Activated CD4-positive, alpha-beta memory T cell treated with anti-CD3 and anti-CD28 coated beads, Interleukin-2, amount 10 ng/mL, durations not matched to agents 7 days and 5 days (primary cell): ENCODE measurements at regions of chr15 and their contacts with region 1.

Region 1: DNA sequence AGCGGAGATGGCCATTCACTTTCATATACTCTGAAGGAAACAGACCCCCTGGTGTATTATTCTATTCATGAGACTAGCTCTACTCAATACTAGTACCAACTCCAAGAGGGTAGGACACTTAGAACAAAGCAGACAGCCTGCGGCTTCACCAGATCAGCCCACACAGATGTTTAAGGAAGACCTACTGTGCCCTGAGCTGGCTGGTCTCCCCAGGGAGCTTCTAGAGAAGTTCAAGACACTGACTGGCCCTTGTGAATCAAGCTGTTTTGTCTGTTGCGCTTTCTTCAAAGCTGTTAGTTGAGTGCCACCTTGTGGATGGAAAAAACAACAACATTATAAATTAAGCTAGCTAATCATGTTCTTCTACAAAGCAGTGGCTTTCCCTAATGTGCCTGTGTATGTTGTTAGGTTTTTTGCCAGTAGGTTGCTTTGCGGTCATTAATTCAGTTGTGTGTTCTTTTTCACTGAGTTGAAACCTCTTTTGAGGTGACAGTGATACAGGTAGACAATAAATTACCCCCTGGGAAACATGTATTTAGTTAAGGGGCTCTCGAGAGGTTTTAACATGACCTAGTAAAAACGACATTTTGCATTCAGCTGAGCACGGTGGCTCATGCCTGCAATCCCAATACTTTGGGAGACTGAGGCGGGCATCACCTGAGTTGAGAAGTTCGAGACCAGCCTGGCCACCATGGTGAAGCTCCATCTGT is 64.2 kb upstream of the MYZAP start:
- DNase-seq: no peak
- H3K4me3 Mint-ChIP-seq: no peak overlapping the region
- H3K27ac Mint-ChIP-seq: no peak overlapping the region
- H3K4me1 Mint-ChIP-seq: no peaks in the 10 kb centered on the region
- H3K27me3 Mint-ChIP-seq: peaks cover 23% of the 10 kb centered on the region

Region 2: GRCh38 chr15:57146506-57147201 is 380.9 kb before region 1 on chr15:
- CTCF ChIA-PET with region 1: interaction called, 14 read pairs
- POLR2A ChIA-PET with region 1: no interaction called
- DNase-seq: no peak
- H3K4me3 Mint-ChIP-seq: no peak overlapping the region
- H3K27ac Mint-ChIP-seq: no peak overlapping the region
- H3K4me1 Mint-ChIP-seq: peaks cover 4% of the 10 kb centered on the region
- H3K27me3 Mint-ChIP-seq: no peaks in the 10 kb centered on the region

Region 3: GRCh38 chr15:57340682-57341259 is 186.8 kb before region 1 on chr15:
- CTCF ChIA-PET with region 1: interaction called, 93 read pairs
- POLR2A ChIA-PET with region 1: no interaction called
- DNase-seq: peak; percentile 36
- H3K4me3 Mint-ChIP-seq: no peak overlapping the region
- H3K27ac Mint-ChIP-seq: no peak overlapping the region
- H3K4me1 Mint-ChIP-seq: no peaks in the 10 kb centered on the region
- H3K27me3 Mint-ChIP-seq: peaks cover 8% of the 10 kb centered on the region

Region 4: GRCh38 chr15:57516327-57517031 is 11.1 kb before region 1 on chr15:
- CTCF ChIA-PET with region 1: interaction called, 10 read pairs
- POLR2A ChIA-PET with region 1: interaction called, 4 read pairs
- DNase-seq: no peak
- H3K4me3 Mint-ChIP-seq: no peak overlapping the region
- H3K27ac Mint-ChIP-seq: no peak overlapping the region
- H3K4me1 Mint-ChIP-seq: no peaks in the 10 kb centered on the region
- H3K27me3 Mint-ChIP-seq: no peaks in the 10 kb centered on the region

Region 5: GRCh38 chr15:57541805-57542504 is 14.4 kb after region 1 on chr15:
- CTCF ChIA-PET with region 1: interaction called, 14 read pairs
- POLR2A ChIA-PET with region 1: no interaction called
- DNase-seq: peak; percentile 35
- H3K4me3 Mint-ChIP-seq: no peak overlapping the region
- H3K27ac Mint-ChIP-seq: no peak overlapping the region
- H3K4me1 Mint-ChIP-seq: peaks cover 2% of the 10 kb centered on the region
- H3K27me3 Mint-ChIP-seq: peaks cover 9% of the 10 kb centered on the region

Region 6: DNA sequence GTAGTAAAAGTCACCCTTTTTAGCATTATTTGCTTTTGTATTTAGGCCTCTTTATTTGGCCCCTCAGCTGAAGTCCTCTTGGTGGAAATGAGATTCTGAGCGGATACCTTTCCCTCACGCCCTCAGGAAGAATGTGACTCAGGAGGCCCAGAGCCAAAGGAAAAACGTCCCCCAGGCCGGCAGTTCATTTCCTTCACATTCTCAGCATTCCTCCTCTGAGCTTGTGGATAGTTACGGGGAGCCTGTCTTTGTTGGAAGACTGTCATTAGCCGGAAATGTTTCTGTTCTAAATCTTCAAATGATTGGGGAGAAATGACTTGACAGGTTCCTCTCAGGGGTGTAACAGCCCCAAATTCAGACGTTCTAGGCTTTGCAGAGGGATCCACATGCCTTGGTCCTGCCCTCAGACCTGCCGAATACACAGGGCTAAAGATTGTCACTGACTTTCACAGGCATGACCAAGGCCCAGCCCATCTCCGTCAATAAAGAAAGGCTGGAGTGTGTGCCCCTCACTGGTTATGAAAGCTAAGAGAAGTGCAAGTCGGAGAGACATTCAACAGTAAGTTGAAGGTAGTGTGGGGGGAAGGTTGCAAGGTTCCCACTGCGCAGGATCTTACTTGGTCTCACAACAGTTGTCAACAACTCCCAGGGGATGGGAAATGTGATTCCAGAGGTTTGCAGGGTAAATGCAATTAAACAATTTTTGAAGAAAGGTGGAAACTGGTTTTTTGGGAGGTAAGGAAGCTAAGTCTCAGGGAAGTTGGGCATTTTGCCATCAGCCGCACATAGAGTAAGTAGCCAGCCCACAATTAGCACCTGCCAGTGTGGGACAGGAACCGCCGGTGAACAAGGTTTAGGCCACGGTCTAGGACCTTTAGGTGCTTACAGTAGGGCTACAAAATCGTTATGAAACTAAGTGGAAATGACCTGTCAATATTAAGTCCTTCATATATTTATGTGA is 24.5 kb after region 1 on chr15:
- CTCF ChIA-PET with region 1: no interaction called
- POLR2A ChIA-PET with region 1: no interaction called
- DNase-seq: no peak
- H3K4me3 Mint-ChIP-seq: no peak overlapping the region
- H3K27ac Mint-ChIP-seq: no peak overlapping the region
- H3K4me1 Mint-ChIP-seq: no peaks in the 10 kb centered on the region
- H3K27me3 Mint-ChIP-seq: no peaks in the 10 kb centered on the region